ENCODE measurements at regions of chr6 and their contacts with region 1.

Region 1: DNA sequence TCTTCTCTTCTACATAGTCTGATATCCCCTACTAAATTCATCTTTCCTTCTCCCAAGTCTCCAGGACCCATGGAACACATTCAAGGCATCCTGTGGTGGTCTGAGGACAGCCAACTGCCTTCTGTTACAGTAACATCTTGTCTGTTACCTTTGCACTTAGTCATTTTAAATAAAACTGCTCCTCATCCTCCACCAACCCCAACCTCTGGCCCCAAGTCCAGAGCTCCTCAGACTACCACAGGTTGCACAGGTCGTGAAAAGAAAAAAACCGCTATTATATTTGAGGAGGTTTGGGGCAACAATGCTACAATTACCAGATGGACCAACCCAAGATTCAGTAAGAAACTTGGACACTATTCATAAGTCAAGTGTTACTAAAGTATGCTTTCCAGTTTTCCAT is 49.9 kb downstream of the MAN1A1 start:
- DNase-seq: no peak

Region 2: GRCh38 chr6:119215885-119216590 is 83.7 kb before region 1 on chr6:
- intact Hi-C with region 1: loop called in 1 of 2 experiments (anchors 2 kb)
- DNase-seq: no peak